SK-N-SH (cell line): ENCODE measurements at regions of chr3 and their contacts with region 1.

Region 1: DNA sequence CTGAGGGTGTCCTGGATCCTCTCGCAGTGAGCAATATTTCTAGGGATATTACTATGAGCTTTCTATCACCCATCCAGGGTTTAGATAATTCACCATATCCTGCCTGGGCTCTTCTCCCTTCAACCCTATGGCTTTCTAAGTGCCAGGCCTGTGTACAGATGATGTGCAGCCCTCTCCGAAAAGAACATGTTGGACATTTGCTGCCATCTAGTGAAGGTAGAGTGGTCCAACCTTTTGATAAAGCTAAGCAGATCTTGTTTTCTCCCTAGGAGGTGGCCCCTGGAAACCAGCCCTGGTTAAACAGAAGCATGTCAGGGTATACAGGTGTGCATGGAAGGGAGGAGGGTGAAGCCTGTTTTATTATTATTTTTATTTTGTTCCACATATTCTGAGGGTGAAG is 27.9 kb upstream of the SCN10A start:
- DNase-seq: peak; percentile 54
- H3K4me3 ChIP-seq: no peak overlapping the region
- H3K27ac ChIP-seq: no peak overlapping the region
- H3K4me1 ChIP-seq: peaks cover 0 to 2% of the 10 kb centered on the region in 2 experiments; a peak in 2 of 4 replicates
- H3K27me3 ChIP-seq: no peaks in the 10 kb centered on the region; the same call in 1 of the 2 replicates
- CTCF ChIP-seq: peak; percentile 67
- EP300 ChIP-seq: no peak
- RAD21 ChIP-seq: peak; percentile 91

Region 2: DNA sequence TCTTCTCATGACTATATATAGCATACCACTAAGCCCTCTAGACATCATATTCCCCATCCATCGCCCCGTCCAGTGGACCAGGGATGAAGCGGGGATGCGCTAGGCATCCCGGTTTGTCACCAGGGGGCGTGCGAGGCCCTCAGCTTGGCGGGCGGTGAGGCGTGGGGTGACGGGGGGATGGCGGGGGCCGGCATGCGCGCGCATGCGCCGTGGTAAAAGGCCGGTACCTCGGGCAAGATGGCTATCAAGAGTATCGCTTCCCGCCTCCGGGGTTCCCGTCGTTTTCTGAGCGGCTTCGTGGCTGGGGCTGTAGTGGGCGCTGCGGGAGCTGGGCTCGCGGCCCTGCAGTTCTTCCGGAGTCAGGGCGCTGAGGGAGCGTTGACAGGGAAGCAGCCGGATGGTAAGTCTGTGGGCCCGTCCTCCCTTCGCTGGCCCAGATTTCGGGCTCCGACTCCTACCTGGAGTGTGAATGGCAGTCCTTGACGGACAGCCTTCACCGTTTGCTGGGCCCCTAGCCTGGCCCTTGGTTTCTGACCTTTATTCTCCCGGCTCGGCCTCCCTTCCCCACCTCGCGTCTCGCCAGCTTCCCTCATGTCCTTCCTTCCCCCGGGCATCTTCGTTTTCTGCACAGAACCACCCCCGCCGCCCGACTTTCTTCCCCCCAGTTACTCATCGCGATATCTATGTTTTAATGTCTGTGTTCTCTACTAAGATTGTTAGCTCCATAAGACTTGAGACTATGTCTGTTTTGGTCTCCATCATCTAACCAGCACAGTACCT is 347.6 kb before region 1 on chr3 and contains the start of gene EXOG:
- CTCF ChIA-PET with region 1: interaction called, 39 read pairs
- POLR2A ChIA-PET with region 1: no interaction called
- DNase-seq: peak; percentile 98
- H3K4me3 ChIP-seq: peak within 1 kb of the TSS; percentile 55 to 75
- H3K27ac ChIP-seq: peak within 1 kb of the TSS; percentile 59 to 77; a peak in 3 of 4 replicates
- H3K4me1 ChIP-seq: peaks cover 0 to 4% of the 10 kb centered on the region in 2 experiments; a peak in 3 of 4 replicates
- H3K27me3 ChIP-seq: no peaks in the 10 kb centered on the region
- CTCF ChIP-seq: peak; percentile 91
- EP300 ChIP-seq: peak in 1 of 2 experiments; percentile 13; a peak in 1 of 4 replicates
- RAD21 ChIP-seq: peak; percentile 81
- polyA plus RNA-seq, gene EXOG: 6.2 and 8.8 TPM in 2 replicates

Region 3: DNA sequence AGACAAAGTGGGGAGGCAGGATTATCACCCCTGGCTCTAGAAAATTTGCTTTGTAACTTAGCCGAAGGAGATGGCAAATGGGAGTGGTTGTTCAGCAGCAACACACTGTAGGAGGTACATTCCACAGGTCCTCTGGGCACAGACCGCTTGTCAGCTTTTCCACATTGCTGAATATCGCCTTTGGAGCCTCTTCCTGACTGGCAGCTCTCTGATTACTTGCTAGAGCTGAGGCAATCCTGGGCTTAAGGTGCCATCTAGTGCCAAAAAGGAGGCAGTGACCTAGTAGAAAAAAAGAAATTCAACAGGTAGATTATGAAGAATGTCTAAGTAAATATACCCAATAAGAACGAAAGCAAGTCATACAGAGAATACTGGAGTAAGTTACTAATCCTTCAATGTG is 181.4 kb before region 1 on chr3:
- CTCF ChIA-PET with region 1: interaction called, 26 read pairs
- POLR2A ChIA-PET with region 1: no interaction called
- DNase-seq: no peak
- H3K4me3 ChIP-seq: no peak overlapping the region
- H3K27ac ChIP-seq: no peak overlapping the region
- H3K4me1 ChIP-seq: peaks cover 0 to 11% of the 10 kb centered on the region in 2 experiments; a peak in 1 of 4 replicates
- H3K27me3 ChIP-seq: no peaks in the 10 kb centered on the region
- CTCF ChIP-seq: peak; percentile 48
- EP300 ChIP-seq: no peak
- RAD21 ChIP-seq: peak; percentile 72

Region 4: DNA sequence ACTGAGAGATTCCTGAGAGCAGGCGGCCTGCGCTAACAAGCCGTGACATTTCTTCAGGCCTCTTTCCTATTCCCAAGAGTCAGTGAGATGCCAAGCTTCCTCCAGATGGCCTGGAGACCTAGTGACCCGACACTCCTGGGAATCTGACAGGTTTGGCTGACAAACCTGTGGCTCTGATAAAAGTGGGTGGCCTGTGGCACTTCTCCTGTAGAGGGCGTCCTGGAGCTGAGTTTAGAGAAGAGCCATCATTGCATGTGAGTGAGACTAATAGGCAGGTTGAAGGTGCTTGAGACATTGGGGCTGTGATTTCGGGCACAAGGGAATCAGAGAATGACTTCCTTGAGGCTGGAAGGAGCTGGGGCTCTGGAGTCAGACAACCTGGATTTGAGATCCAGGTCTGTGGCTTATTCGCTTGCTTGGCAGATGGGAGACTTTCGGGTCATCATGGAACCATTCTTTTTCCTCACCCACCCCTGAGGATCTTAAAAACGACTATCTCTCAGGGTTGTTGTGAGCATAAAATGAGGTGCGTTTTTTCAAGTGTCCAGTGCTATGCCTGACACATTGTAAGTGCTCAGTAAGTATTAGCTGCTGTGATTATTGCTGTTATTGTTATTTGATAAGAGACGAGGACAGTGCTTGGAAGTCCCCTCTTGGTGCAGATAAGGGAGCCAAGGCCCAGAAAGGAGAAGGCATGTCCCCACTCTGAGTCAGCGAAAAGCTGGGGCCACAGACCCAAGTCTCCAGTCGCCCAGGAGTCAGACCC is 105.1 kb before region 1 on chr3:
- CTCF ChIA-PET with region 1: interaction called, 23 read pairs
- POLR2A ChIA-PET with region 1: no interaction called
- DNase-seq: peak; percentile 70
- H3K4me3 ChIP-seq: no peak overlapping the region
- H3K27ac ChIP-seq: no peak overlapping the region
- H3K4me1 ChIP-seq: no peaks in the 10 kb centered on the region
- H3K27me3 ChIP-seq: no peaks in the 10 kb centered on the region
- CTCF ChIP-seq: peak; percentile 78
- EP300 ChIP-seq: no peak
- RAD21 ChIP-seq: peak; percentile 80

Region 5: DNA sequence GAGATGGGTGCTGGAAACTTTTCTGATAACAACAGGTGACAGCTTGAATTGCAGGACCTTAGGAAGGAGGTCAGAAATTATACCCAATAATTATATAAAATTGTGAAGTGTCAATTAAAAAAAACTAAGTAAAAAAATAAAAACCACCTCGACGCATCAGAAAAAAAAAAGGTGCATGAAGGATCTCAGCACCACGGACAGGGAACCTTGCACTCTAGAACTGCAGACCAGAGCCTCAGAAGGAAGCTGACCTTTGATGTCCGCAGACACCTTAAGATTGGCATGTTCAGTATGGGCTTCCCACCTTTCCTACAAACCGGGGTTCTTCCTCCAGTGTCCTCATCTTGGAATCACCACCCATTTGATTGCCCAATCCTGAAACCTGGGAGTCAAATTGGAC is 88.8 kb before region 1 on chr3:
- CTCF ChIA-PET with region 1: interaction called, 10 read pairs
- POLR2A ChIA-PET with region 1: no interaction called
- DNase-seq: no peak
- H3K4me3 ChIP-seq: no peak overlapping the region
- H3K27ac ChIP-seq: no peak overlapping the region
- H3K4me1 ChIP-seq: no peaks in the 10 kb centered on the region
- H3K27me3 ChIP-seq: no peaks in the 10 kb centered on the region
- CTCF ChIP-seq: no peak
- EP300 ChIP-seq: no peak
- RAD21 ChIP-seq: no peak

Region 6: GRCh38 chr3:38805765-38806386 is 38.0 kb before region 1 on chr3:
- CTCF ChIA-PET with region 1: interaction called, 12 read pairs
- POLR2A ChIA-PET with region 1: no interaction called
- DNase-seq: no peak
- H3K4me3 ChIP-seq: no peak overlapping the region
- H3K27ac ChIP-seq: no peak overlapping the region
- H3K4me1 ChIP-seq: peaks cover 0 to 5% of the 10 kb centered on the region in 2 experiments; a peak in 2 of 4 replicates
- H3K27me3 ChIP-seq: no peaks in the 10 kb centered on the region
- CTCF ChIP-seq: no peak
- EP300 ChIP-seq: no peak
- RAD21 ChIP-seq: no peak

Region 7: DNA sequence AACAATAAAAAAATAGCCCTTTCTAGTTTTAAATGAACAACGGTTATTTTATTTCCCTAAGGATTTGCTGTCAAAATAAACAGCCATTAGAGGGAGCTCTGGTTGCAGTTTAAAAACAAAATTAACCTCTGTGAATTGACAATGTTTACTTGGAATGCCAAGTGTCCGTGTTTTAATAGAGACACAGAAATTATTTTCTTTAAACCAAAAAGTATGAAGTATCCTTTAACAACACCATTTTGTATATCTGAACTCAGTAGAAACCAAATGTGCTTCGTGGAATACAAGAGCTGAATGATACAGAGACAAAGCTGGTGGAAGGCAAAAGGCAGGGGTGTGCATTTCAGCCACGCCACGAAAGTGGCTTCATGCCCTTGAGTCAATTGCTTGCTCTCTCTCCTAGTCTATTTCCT is 698.0 kb after region 1 on chr3:
- CTCF ChIA-PET with region 1: no interaction called
- POLR2A ChIA-PET with region 1: no interaction called
- DNase-seq: peak; percentile 6
- H3K4me3 ChIP-seq: peak overlapping the region in 1 of 2 experiments; percentile 16; a peak in 1 of 4 replicates
- H3K27ac ChIP-seq: no peak overlapping the region
- H3K4me1 ChIP-seq: no peaks in the 10 kb centered on the region; a peak in 1 of 4 replicates
- H3K27me3 ChIP-seq: no peaks in the 10 kb centered on the region
- CTCF ChIP-seq: peak; percentile 71
- EP300 ChIP-seq: no peak
- RAD21 ChIP-seq: peak; percentile 71